ENCODE measurements at regions of chr3 and their contacts with region 1.

Region 1: GRCh38 chr3:114152519-114153151 is 26.2 kb downstream of the DRD3 start:
- DNase-seq: peak; percentile 33
- ATAC-seq: peak; percentile 94
- H3K4me3 ChIP-seq: peak overlapping the region; percentile 45; the same call in 1 of the 2 replicates
- H3K27ac ChIP-seq: no peak overlapping the region
- H3K4me1 ChIP-seq: no peaks in the 10 kb centered on the region; the same call in 1 of the 2 replicates
- H3K27me3 ChIP-seq: 0 out of 4 replicates have a peak, but pooled peaks cover 0 to 1% of the 10 kb centered on the region in 2 experiments
- CTCF ChIP-seq: peak; percentile 86 to 95 (median 94)
- EP300 ChIP-seq: 0 out of 4 replicates have a peak, but pooled peaks of 1 of the 2 experiments have one; percentile 3
- POLR2A ChIP-seq: no peak
- RAD21 ChIP-seq: peak; percentile 93

Region 2: DNA sequence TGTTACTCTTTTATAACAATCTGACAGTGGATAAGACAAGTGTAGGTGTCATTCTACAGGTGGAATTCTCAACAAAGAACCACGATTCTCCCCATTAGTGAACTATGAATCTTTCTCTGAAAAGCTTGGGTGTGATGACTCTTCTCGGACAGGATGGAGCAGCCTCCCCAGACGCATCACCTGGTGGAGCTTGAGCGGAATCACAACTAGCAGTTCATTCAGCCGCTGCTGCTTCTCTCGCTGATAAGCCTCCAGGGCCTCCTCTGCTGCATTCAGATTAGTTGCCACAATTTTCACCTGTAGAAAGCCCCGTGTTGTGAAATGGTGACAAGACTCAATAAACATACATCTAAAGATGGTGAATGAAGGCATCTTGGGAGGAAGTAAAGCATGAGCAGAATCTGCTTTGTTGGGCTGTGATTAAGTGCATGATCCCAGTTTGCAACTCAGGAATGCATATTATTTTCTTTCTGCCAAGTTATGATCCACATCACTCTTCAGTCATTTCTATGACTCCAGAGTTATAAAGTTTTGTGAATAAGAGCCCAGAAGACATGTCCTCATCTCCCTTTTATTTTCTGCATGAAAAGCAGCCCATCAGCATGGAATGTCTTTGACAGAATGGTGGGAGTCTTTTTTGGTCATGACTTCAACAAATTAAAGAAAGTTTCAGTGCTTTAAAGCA is 847.6 kb before region 1 on chr3:
- CTCF ChIA-PET with region 1: no interaction called
- POLR2A ChIA-PET with region 1: no interaction called
- RAD21 ChIA-PET with region 1: no interaction called
- SMC1A ChIA-PET with region 1: no interaction called
- in situ Hi-C with region 1: no loop called
- intact Hi-C with region 1: no loop called
- DNase-seq: no peak
- ATAC-seq: no peak
- H3K4me3 ChIP-seq: no peak overlapping the region
- H3K27ac ChIP-seq: no peak overlapping the region
- H3K4me1 ChIP-seq: no peaks in the 10 kb centered on the region
- H3K27me3 ChIP-seq: no peaks in the 10 kb centered on the region
- CTCF ChIP-seq: no peak
- EP300 ChIP-seq: no peak
- POLR2A ChIP-seq: no peak
- RAD21 ChIP-seq: no peak

Region 3: DNA sequence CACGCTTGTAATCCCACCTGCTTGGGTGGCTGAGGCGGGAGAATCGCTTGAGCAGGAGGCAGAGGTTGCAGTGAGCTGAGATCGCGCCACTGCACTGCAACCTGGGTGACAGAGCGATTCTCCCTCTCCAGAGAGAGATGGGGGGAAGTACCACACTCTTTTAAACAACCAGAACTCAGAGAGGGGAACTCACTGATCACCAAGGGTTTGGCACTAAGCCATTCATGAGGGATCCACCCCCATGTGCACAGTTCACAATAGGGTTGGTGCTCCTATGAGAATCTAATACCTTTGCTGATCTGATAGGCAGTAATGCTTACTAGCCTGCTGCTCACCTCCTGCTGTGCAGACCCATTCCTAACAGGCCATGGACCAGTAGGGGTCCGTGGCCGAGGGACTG is 44.5 kb before region 1 on chr3:
- CTCF ChIA-PET with region 1: no interaction called
- POLR2A ChIA-PET with region 1: no interaction called
- RAD21 ChIA-PET with region 1: no interaction called
- SMC1A ChIA-PET with region 1: no interaction called
- in situ Hi-C with region 1: no loop called
- intact Hi-C with region 1: no loop called
- DNase-seq: no peak
- ATAC-seq: no peak
- H3K4me3 ChIP-seq: no peak overlapping the region
- H3K27ac ChIP-seq: no peak overlapping the region
- H3K4me1 ChIP-seq: no peaks in the 10 kb centered on the region
- H3K27me3 ChIP-seq: no peaks in the 10 kb centered on the region; a peak in 1 of 4 replicates
- CTCF ChIP-seq: no peak
- EP300 ChIP-seq: no peak
- POLR2A ChIP-seq: no peak
- RAD21 ChIP-seq: no peak

Region 4: DNA sequence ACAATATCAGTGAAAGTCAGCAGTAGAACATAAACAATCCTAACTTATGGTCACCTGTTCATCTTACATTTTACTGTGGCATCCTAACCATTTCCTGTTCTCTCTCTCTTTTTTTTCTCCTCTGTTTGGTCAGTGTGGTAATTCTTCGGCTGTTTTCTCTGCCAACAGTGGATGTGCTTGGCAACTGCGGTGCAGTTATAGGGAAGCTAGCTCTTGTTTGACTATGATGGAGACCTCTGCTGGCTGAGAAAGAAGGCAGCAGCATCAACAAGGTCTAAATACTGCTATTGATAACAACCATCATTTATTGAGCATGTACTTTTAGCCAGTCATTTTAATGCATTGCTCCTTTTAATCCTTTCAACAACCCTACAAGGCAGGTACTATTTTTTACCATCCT is 26.9 kb after region 1 on chr3:
- CTCF ChIA-PET with region 1: interaction called, 13 read pairs
- POLR2A ChIA-PET with region 1: no interaction called
- RAD21 ChIA-PET with region 1: no interaction called
- SMC1A ChIA-PET with region 1: interaction called, 7 read pairs
- in situ Hi-C with region 1: no loop called
- intact Hi-C with region 1: no loop called
- DNase-seq: no peak
- ATAC-seq: peak; percentile 71
- H3K4me3 ChIP-seq: no peak overlapping the region
- H3K27ac ChIP-seq: no peak overlapping the region
- H3K4me1 ChIP-seq: no peaks in the 10 kb centered on the region
- H3K27me3 ChIP-seq: peaks cover 0 to 2% of the 10 kb centered on the region in 2 experiments; a peak in 1 of 4 replicates
- CTCF ChIP-seq: peak; percentile 24 to 46 (median 30); a peak in 5 of 6 replicates
- EP300 ChIP-seq: no peak
- POLR2A ChIP-seq: no peak
- RAD21 ChIP-seq: 0 out of 2 replicates have a peak, but pooled peaks have one; percentile 11

Region 5: GRCh38 chr3:114336122-114336697 is 183.6 kb after region 1 on chr3:
- CTCF ChIA-PET with region 1: interaction called, 8 read pairs
- POLR2A ChIA-PET with region 1: no interaction called
- RAD21 ChIA-PET with region 1: interaction called, 3 read pairs
- SMC1A ChIA-PET with region 1: no interaction called
- in situ Hi-C with region 1: no loop called
- intact Hi-C with region 1: loop called (anchors 2 kb)
- DNase-seq: no peak
- ATAC-seq: no peak
- H3K4me3 ChIP-seq: no peak overlapping the region
- H3K27ac ChIP-seq: no peak overlapping the region
- H3K4me1 ChIP-seq: peaks cover 14% of the 10 kb centered on the region; the same call in 1 of the 2 replicates
- H3K27me3 ChIP-seq: no peaks in the 10 kb centered on the region
- CTCF ChIP-seq: peak; percentile 19 to 33 (median 30); a peak in 4 of 6 replicates
- EP300 ChIP-seq: no peak
- POLR2A ChIP-seq: no peak
- RAD21 ChIP-seq: 0 out of 2 replicates have a peak, but pooled peaks have one; percentile 11

Region 6: DNA sequence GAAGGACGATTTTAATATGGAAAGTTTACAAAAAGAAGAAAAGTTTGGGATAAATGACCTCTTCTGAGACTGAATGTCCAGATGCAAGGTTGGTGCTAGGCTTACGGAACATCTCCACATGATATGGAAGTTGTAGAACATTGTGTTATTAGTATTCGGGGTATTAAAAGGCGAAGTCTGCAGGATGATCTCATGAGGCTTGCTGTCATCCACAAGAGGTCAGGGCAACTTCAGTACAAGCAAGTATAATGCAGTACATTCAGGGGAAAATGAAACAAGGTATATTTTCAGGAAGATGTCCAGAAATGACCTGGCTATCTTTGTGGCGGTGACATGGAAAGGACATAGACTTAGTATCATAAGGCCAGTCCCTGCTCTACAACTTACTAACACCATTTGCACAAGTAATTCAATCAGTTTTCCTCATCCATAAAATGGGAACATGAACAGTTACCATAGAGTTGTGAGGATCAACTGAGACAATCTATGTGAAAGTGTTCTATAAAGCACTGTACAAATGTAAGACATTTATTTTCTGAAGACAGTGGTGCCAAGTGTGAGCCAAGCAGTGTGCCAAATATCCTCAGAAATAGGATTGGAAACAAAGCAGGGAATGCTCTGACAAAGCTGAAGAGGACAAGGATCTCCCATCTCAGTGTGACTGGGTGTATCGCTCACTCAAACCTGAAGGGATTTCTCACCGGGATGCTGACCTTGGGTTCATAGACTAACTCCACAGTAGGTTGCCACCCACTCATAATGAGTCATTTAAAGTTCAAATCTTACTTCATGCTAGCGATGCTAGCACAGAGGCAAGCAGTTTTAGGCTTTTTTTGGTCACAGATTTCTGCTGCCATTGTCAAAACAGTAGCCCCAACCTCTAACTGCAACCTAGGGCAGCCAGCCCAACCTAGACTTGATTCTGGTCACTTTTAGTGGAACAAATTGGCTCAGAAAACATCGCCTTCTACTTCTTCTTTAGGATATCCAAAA is 259.5 kb after region 1 on chr3:
- CTCF ChIA-PET with region 1: interaction called, 90 read pairs
- POLR2A ChIA-PET with region 1: no interaction called
- RAD21 ChIA-PET with region 1: no interaction called
- SMC1A ChIA-PET with region 1: interaction called, 3 read pairs
- in situ Hi-C with region 1: loop called (anchors 5 kb)
- intact Hi-C with region 1: no loop called
- DNase-seq: no peak
- ATAC-seq: peak; percentile 72
- H3K4me3 ChIP-seq: peak overlapping the region; percentile 41; the same call in 1 of the 2 replicates
- H3K27ac ChIP-seq: no peak overlapping the region
- H3K4me1 ChIP-seq: peaks cover 9% of the 10 kb centered on the region
- H3K27me3 ChIP-seq: no peaks in the 10 kb centered on the region
- CTCF ChIP-seq: peak in 1 of 3 experiments; percentile 34; a peak in 2 of 6 replicates
- EP300 ChIP-seq: no peak
- POLR2A ChIP-seq: no peak
- RAD21 ChIP-seq: peak; percentile 33; the same call in 1 of the 2 replicates

Measured in GM12878 (cell line).